ENCODE measurements at regions of chr2 and their contacts with region 1.

Region 1: GRCh38 chr2:19863303-19864041 is 38.3 kb downstream of the TTC32 start:
- DNase-seq: peak; percentile 74 to 84 (median 80)
- ATAC-seq: peak; percentile 94
- H3K4me3 ChIP-seq: no peak overlapping the region
- H3K27ac ChIP-seq: no peak overlapping the region
- H3K4me1 ChIP-seq: peaks cover 4 to 9% of the 10 kb centered on the region in 2 experiments; a peak in 3 of 5 replicates
- H3K27me3 ChIP-seq: peaks cover 18 to 41% of the 10 kb centered on the region in 2 experiments
- CTCF ChIP-seq: peak; percentile 90 to 93 (median 93)
- EP300 ChIP-seq: no peak
- POLR2A ChIP-seq: no peak
- RAD21 ChIP-seq: peak; percentile 97

Region 2: GRCh38 chr2:18398833-18399232 is 1464.6 kb before region 1 on chr2:
- CTCF ChIA-PET with region 1: no interaction called
- POLR2A ChIA-PET with region 1: no interaction called
- in situ Hi-C with region 1: no loop called
- intact Hi-C with region 1: loop called (anchors 5 kb)
- DNase-seq: no peak
- ATAC-seq: no peak
- H3K4me3 ChIP-seq: no peak overlapping the region
- H3K27ac ChIP-seq: no peak overlapping the region
- H3K4me1 ChIP-seq: no peaks in the 10 kb centered on the region
- H3K27me3 ChIP-seq: no peaks in the 10 kb centered on the region
- CTCF ChIP-seq: no peak
- EP300 ChIP-seq: no peak
- POLR2A ChIP-seq: no peak
- RAD21 ChIP-seq: no peak

Region 3: GRCh38 chr2:18520451-18521425 is 1342.7 kb before region 1 on chr2:
- CTCF ChIA-PET with region 1: interaction called, 8 read pairs
- POLR2A ChIA-PET with region 1: no interaction called
- in situ Hi-C with region 1: loop called (anchors 5 kb)
- intact Hi-C with region 1: loop called (anchors 2 kb)
- DNase-seq: peak; percentile 71 to 77 (median 75)
- ATAC-seq: peak; percentile 97
- H3K4me3 ChIP-seq: no peak overlapping the region
- H3K27ac ChIP-seq: no peak overlapping the region
- H3K4me1 ChIP-seq: 0 out of 5 replicates have a peak, but pooled peaks cover 0 to 2% of the 10 kb centered on the region in 2 experiments
- H3K27me3 ChIP-seq: peaks cover 0 to 6% of the 10 kb centered on the region in 2 experiments; a peak in 2 of 5 replicates
- CTCF ChIP-seq: peak; percentile 77 to 87 (median 85)
- EP300 ChIP-seq: no peak
- POLR2A ChIP-seq: no peak
- RAD21 ChIP-seq: peak; percentile 88 to 91

Region 4: DNA sequence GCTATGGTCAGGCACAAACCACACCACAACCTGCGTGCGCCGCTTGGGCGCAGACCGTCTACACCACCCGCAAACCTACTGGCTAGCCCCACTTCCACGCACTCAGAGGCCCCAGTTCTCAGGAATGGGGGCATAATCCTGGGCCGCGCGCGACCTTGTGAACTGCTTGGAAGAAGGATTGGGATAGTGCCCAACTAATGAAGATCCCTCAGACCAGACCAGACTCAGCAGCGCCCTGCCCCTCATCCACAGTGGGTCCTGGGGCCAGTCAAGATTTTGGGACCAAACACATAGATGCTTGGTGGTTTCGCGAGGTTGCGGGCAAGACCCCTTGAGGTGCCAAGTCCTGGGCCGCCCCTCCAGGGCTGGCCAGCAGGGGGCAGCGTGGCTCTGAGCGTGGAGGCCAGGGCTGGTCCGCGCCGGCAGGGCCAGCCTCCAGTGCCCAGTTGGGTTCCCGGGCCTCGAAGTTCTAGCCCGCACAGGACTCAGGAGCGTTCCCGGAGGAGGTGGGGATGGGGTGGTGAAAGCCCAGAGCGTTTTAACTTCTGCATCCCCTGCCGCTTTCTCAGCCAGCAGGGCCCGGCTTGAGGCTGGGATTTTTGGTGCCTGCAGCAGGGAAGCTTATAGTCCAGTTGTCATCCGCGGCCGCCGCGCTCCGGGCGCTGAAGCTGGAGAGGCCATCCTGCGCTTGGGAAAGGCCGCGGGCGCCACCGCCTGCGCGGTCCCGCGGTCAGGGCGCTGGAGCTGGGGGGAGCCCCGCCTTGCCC is 513.4 kb before region 1 on chr2:
- CTCF ChIA-PET with region 1: no interaction called
- POLR2A ChIA-PET with region 1: no interaction called
- in situ Hi-C with region 1: loop called (anchors 10 kb)
- intact Hi-C with region 1: no loop called
- DNase-seq: peak; percentile 64 to 66 (median 64)
- ATAC-seq: peak; percentile 66
- H3K4me3 ChIP-seq: peak overlapping the region; percentile 7; the same call in 1 of the 2 replicates
- H3K27ac ChIP-seq: no peak overlapping the region
- H3K4me1 ChIP-seq: peaks cover 0 to 17% of the 10 kb centered on the region in 2 experiments; a peak in 3 of 5 replicates
- H3K27me3 ChIP-seq: peaks cover 23 to 53% of the 10 kb centered on the region in 2 experiments; a peak in 4 of 5 replicates
- CTCF ChIP-seq: peak; percentile 57 to 78 (median 62); a peak in 5 of 6 replicates
- EP300 ChIP-seq: no peak
- POLR2A ChIP-seq: no peak
- RAD21 ChIP-seq: peak in 1 of 2 experiments; percentile 52; a peak in 3 of 4 replicates

Region 5: GRCh38 chr2:19568809-19569791 is 294.4 kb before region 1 on chr2:
- CTCF ChIA-PET with region 1: no interaction called
- POLR2A ChIA-PET with region 1: no interaction called
- in situ Hi-C with region 1: no loop called
- intact Hi-C with region 1: loop called (anchors 5 kb)
- DNase-seq: no peak
- ATAC-seq: no peak
- H3K4me3 ChIP-seq: no peak overlapping the region
- H3K27ac ChIP-seq: no peak overlapping the region
- H3K4me1 ChIP-seq: no peaks in the 10 kb centered on the region
- H3K27me3 ChIP-seq: no peaks in the 10 kb centered on the region
- CTCF ChIP-seq: no peak
- EP300 ChIP-seq: no peak
- POLR2A ChIP-seq: no peak
- RAD21 ChIP-seq: no peak

Region 6: GRCh38 chr2:19769513-19769912 is 94.0 kb before region 1 on chr2:
- CTCF ChIA-PET with region 1: interaction called, 5 read pairs
- POLR2A ChIA-PET with region 1: no interaction called
- in situ Hi-C with region 1: no loop called
- intact Hi-C with region 1: loop called (anchors 5 kb)
- DNase-seq: no peak
- ATAC-seq: no peak
- H3K4me3 ChIP-seq: no peak overlapping the region
- H3K27ac ChIP-seq: no peak overlapping the region
- H3K4me1 ChIP-seq: peaks cover 0 to 7% of the 10 kb centered on the region in 2 experiments; a peak in 1 of 5 replicates
- H3K27me3 ChIP-seq: 0 out of 5 replicates have a peak, but pooled peaks cover 0 to 2% of the 10 kb centered on the region in 2 experiments
- CTCF ChIP-seq: peak in 2 of 3 experiments; percentile 9 to 47; a peak in 2 of 6 replicates
- EP300 ChIP-seq: no peak
- POLR2A ChIP-seq: no peak
- RAD21 ChIP-seq: peak in 1 of 2 experiments; percentile 22; a peak in 1 of 4 replicates

Region 7: GRCh38 chr2:19942199-19942598 is 78.7 kb after region 1 on chr2:
- CTCF ChIA-PET with region 1: no interaction called
- POLR2A ChIA-PET with region 1: no interaction called
- in situ Hi-C with region 1: no loop called
- intact Hi-C with region 1: no loop called
- DNase-seq: no peak
- ATAC-seq: no peak
- H3K4me3 ChIP-seq: no peak overlapping the region
- H3K27ac ChIP-seq: no peak overlapping the region
- H3K4me1 ChIP-seq: no peaks in the 10 kb centered on the region
- H3K27me3 ChIP-seq: no peaks in the 10 kb centered on the region
- CTCF ChIP-seq: no peak
- EP300 ChIP-seq: no peak
- POLR2A ChIP-seq: no peak
- RAD21 ChIP-seq: no peak

Region 8: GRCh38 chr2:20145497-20146193 is 282.2 kb after region 1 on chr2:
- CTCF ChIA-PET with region 1: no interaction called
- POLR2A ChIA-PET with region 1: no interaction called
- in situ Hi-C with region 1: no loop called
- intact Hi-C with region 1: no loop called
- DNase-seq: peak; percentile 34 to 79 (median 53)
- ATAC-seq: peak; percentile 84
- H3K4me3 ChIP-seq: no peak overlapping the region
- H3K27ac ChIP-seq: peak overlapping the region; percentile 37; the same call in 1 of the 3 replicates
- H3K4me1 ChIP-seq: peaks cover 12 to 28% of the 10 kb centered on the region in 2 experiments; a peak in 4 of 5 replicates
- H3K27me3 ChIP-seq: peaks cover 0 to 4% of the 10 kb centered on the region in 2 experiments; a peak in 1 of 5 replicates
- CTCF ChIP-seq: no peak
- EP300 ChIP-seq: no peak
- POLR2A ChIP-seq: no peak
- RAD21 ChIP-seq: no peak

Measured in K562 (cell line).